BJ (cell line): ENCODE measurements at regions of chr17 and their contacts with region 1.

Region 1: GRCh38 chr17:75645889-75646637 is 12.8 kb downstream of the SMIM5 start:
- DNase-seq: no peak
- H3K4me3 ChIP-seq: no peak overlapping the region
- H3K27me3 ChIP-seq: no peaks in the 10 kb centered on the region
- CTCF ChIP-seq: no peak

Region 2: GRCh38 chr17:75476271-75476671 is 169.8 kb before region 1 on chr17:
- CTCF ChIA-PET with region 1: no interaction called
- POLR2A ChIA-PET with region 1: interaction called, 30 read pairs
- DNase-seq: no peak
- H3K4me3 ChIP-seq: no peak overlapping the region
- H3K27me3 ChIP-seq: no peaks in the 10 kb centered on the region
- CTCF ChIP-seq: no peak